ENCODE measurements at regions of chr2 and their contacts with region 1.

Region 1: GRCh38 chr2:84925724-84926376 is 20.4 kb downstream of the TMSB10 start:
- DNase-seq: peak; percentile 93 to 99
- H3K4me3 ChIP-seq: peak overlapping the region; percentile 32
- H3K4me1 ChIP-seq: peaks cover 17% of the 10 kb centered on the region
- H3K27me3 ChIP-seq: no peaks in the 10 kb centered on the region

Region 2: DNA sequence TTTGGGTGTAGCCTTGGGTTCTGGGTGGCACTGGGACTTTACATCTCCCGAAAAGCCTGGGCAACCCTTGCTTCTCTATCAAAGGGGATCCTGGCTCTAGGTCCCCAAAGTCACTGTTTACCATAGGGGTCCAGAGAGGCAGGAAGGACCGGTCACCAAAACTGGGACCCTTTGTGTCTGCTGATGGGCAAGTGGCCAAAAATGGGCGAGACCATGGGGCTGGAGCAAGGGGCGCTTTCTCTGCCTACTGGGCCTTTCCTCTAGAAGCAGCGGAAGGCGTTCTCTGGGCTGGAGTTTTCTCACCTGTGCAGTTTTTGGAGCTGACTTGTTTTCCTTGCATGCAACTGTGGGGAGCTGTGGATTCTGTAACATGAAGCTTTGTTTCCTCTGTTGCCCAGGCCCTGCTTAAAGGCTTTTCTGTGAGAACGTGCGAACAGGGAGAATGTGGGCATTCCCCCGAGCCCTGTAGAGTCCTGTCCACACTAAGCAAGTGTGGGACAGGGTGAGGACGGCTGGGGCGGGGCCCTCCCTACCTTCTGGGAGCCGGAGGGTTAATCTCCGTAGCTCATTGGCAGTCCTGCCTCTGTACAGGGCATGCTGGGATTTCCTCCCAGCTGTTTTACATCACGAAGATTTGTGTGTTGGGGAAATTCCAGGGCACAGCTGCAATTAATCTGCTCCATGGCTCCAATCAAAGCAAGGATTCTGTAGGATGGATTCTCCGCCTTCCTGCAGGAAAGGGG is 351.7 kb after region 1 on chr2:
- in situ Hi-C with region 1: loop called (anchors 25 kb)
- DNase-seq: no peak
- H3K4me3 ChIP-seq: no peak overlapping the region
- H3K4me1 ChIP-seq: no peaks in the 10 kb centered on the region
- H3K27me3 ChIP-seq: no peaks in the 10 kb centered on the region

Measured in HAP-1 (cell line).